Left ventricle myocardium superior (tissue), 1 donor: ENCODE measurements at regions of chr20 and their contacts with region 1.

Region 1: GRCh38 chr20:13819885-13820645 is 35.2 kb downstream of the NDUFAF5 start:
- DNase-seq: no peak
- ATAC-seq: peak; percentile 72

Region 2: GRCh38 chr20:14055127-14055742 is 235.2 kb after region 1 on chr20:
- intact Hi-C with region 1: loop called (anchors 2 kb)
- DNase-seq: no peak
- ATAC-seq: no peak